ENCODE measurements at regions of chr22 and their contacts with region 1.

Region 1: GRCh38 chr22:37862570-37863325 is 13.5 kb downstream of the EIF3L start:
- DNase-seq: no peak
- ATAC-seq: no peak
- H3K4me3 ChIP-seq: no peak overlapping the region
- H3K4me3 Mint-ChIP-seq: no peak overlapping the region
- H3K27ac ChIP-seq: no peak overlapping the region
- H3K27ac Mint-ChIP-seq: no peak overlapping the region
- H3K4me1 ChIP-seq: no peaks in the 10 kb centered on the region
- H3K4me1 Mint-ChIP-seq: peaks cover 3 to 14% (median 9%) of the 10 kb centered on the region in 3 donors
- H3K27me3 ChIP-seq: no peaks in the 10 kb centered on the region
- H3K27me3 Mint-ChIP-seq: no peaks in the 10 kb centered on the region

Region 2: GRCh38 chr22:37581504-37581903 is 281.2 kb before region 1 on chr22:
- CTCF ChIA-PET with region 1: no interaction called
- POLR2A ChIA-PET with region 1: no interaction called
- DNase-seq: no peak
- ATAC-seq: no peak
- H3K4me3 ChIP-seq: no peak overlapping the region
- H3K4me3 Mint-ChIP-seq: no peak overlapping the region
- H3K27ac ChIP-seq: no peak overlapping the region
- H3K27ac Mint-ChIP-seq: peak overlapping the region in 1 of 2 donors; percentile 52
- H3K4me1 ChIP-seq: peaks cover 13 to 15% of the 10 kb centered on the region in 2 experiments
- H3K4me1 Mint-ChIP-seq: peaks cover 13 to 17% (median 16%) of the 10 kb centered on the region in 3 donors
- H3K27me3 ChIP-seq: peaks cover 0 to 32% of the 10 kb centered on the region in 2 experiments
- H3K27me3 Mint-ChIP-seq: peaks cover 0 to 8% of the 10 kb centered on the region in 2 donors

Region 3: GRCh38 chr22:37817705-37818408 is 44.9 kb before region 1 on chr22:
- CTCF ChIA-PET with region 1: interaction called, 10 to 41 read pairs
- POLR2A ChIA-PET with region 1: no interaction called
- DNase-seq: peak; percentile 40 to 87 (median 71)
- ATAC-seq: peak; percentile 80 to 82 (median 80)
- H3K4me3 ChIP-seq: peak overlapping the region; percentile 40 to 65
- H3K4me3 Mint-ChIP-seq: peak overlapping the region; percentile 34 to 62 (median 43)
- H3K27ac ChIP-seq: no peak overlapping the region
- H3K27ac Mint-ChIP-seq: no peak overlapping the region
- H3K4me1 ChIP-seq: peaks cover 3 to 20% of the 10 kb centered on the region in 2 experiments
- H3K4me1 Mint-ChIP-seq: peaks cover 13 to 15% (median 13%) of the 10 kb centered on the region in 3 donors
- H3K27me3 ChIP-seq: peaks cover 0 to 75% of the 10 kb centered on the region in 2 experiments
- H3K27me3 Mint-ChIP-seq: peaks cover 18 to 23% of the 10 kb centered on the region in 2 donors

Region 4: GRCh38 chr22:37843741-37843990 is 19.1 kb before region 1 on chr22:
- CTCF ChIA-PET with region 1: interaction called, 3 to 12 read pairs
- POLR2A ChIA-PET with region 1: interaction called in 1 of 2 experiments, 3 read pairs
- DNase-seq: peak in 4 of 35 experiments; percentile 20 to 42 (median 31)
- ATAC-seq: peak; percentile 37 to 49 (median 45)
- H3K4me3 ChIP-seq: peak overlapping the region; percentile 47 to 48
- H3K4me3 Mint-ChIP-seq: peak overlapping the region; percentile 79 to 83 (median 80)
- H3K27ac ChIP-seq: peak overlapping the region; percentile 65
- H3K27ac Mint-ChIP-seq: peak overlapping the region; percentile 76 to 84
- H3K4me1 ChIP-seq: peaks cover 6 to 26% of the 10 kb centered on the region in 2 experiments
- H3K4me1 Mint-ChIP-seq: peaks cover 14 to 28% (median 25%) of the 10 kb centered on the region in 3 donors
- H3K27me3 ChIP-seq: no peaks in the 10 kb centered on the region
- H3K27me3 Mint-ChIP-seq: no peaks in the 10 kb centered on the region

Region 5: DNA sequence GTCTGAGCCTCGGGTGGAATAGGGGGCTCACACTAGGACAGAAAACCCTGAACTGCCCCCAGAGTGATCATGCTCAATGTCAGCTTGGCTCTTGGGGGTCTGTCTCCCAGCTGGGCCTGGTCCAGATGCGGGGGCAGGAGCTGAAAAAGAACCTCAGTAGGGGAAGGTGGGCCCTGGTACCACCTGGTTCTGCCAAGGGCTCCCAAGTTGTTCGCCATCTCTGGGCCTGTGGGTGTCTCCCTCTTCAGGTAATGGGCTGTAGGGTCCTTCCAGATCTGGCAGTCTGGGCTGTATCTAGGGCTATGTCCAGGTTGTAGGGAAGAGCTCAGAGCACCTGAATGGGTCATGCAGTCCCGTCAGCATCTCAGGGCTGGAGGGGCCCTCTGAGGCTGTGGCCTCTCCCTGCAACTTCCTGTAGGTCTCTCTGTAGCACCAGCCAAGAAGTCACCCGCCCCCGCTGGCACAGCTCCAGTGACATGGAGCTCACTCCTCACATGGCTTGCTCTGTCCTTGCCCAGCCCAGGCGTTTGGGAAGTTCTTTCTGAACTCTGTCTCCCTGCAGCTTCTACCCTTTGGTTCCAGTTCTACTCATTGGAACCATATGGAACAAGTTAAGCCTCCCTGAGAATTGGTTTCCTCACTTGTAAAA is 154.6 kb after region 1 on chr22:
- CTCF ChIA-PET with region 1: no interaction called
- POLR2A ChIA-PET with region 1: no interaction called
- DNase-seq: no peak
- ATAC-seq: no peak
- H3K4me3 ChIP-seq: no peak overlapping the region
- H3K4me3 Mint-ChIP-seq: no peak overlapping the region
- H3K27ac ChIP-seq: no peak overlapping the region
- H3K27ac Mint-ChIP-seq: no peak overlapping the region
- H3K4me1 ChIP-seq: peaks cover 0 to 5% of the 10 kb centered on the region in 2 experiments
- H3K4me1 Mint-ChIP-seq: no peaks in the 10 kb centered on the region
- H3K27me3 ChIP-seq: peaks cover 0 to 13% of the 10 kb centered on the region in 2 experiments
- H3K27me3 Mint-ChIP-seq: no peaks in the 10 kb centered on the region

Measured in T-cell (primary cell).